CD8-positive, alpha-beta T cell (primary cell): ENCODE measurements at regions of chr4 and their contacts with region 1.

Region 1: GRCh38 chr4:40395908-40396793 is 61.0 kb downstream of the CHRNA9 start:
- DNase-seq: no peak
- ATAC-seq: no peak
- H3K4me3 ChIP-seq: no peak overlapping the region
- H3K4me3 Mint-ChIP-seq: no peak overlapping the region
- H3K27ac ChIP-seq: no peak overlapping the region
- H3K27ac Mint-ChIP-seq: no peak overlapping the region
- H3K4me1 ChIP-seq: no peaks in the 10 kb centered on the region
- H3K4me1 Mint-ChIP-seq: no peaks in the 10 kb centered on the region
- H3K27me3 ChIP-seq: no peaks in the 10 kb centered on the region
- H3K27me3 Mint-ChIP-seq: no peaks in the 10 kb centered on the region
- CTCF ChIP-seq: no peak

Region 2: GRCh38 chr4:40099010-40099409 is 297.1 kb before region 1 on chr4:
- CTCF ChIA-PET with region 1: no interaction called
- POLR2A ChIA-PET with region 1: no interaction called
- intact Hi-C with region 1: no loop called
- DNase-seq: no peak
- ATAC-seq: no peak
- H3K4me3 ChIP-seq: no peak overlapping the region
- H3K4me3 Mint-ChIP-seq: no peak overlapping the region
- H3K27ac ChIP-seq: no peak overlapping the region
- H3K27ac Mint-ChIP-seq: no peak overlapping the region
- H3K4me1 ChIP-seq: no peaks in the 10 kb centered on the region
- H3K4me1 Mint-ChIP-seq: peaks cover 9% of the 10 kb centered on the region
- H3K27me3 ChIP-seq: no peaks in the 10 kb centered on the region
- H3K27me3 Mint-ChIP-seq: no peaks in the 10 kb centered on the region
- CTCF ChIP-seq: no peak

Region 3: DNA sequence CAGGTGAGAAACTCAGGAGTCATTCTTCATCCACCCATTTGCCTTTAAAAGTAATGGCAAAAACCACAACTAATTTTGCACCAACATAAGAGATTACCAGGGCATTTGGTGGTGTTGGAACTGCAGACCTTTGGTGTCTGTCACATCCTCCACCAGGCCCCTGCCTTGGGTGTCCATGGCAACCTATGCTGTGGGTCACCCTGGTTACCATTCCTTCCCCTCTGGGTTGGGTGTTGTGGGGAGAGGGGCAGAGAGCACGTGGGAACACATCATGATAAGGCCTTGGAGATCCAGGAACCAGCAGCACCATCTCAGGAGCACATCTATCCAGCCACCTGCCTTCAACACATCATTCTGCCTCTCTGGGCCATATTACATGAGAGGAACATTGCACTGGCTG is 16.2 kb after region 1 on chr4:
- CTCF ChIA-PET with region 1: no interaction called
- POLR2A ChIA-PET with region 1: no interaction called
- intact Hi-C with region 1: loop called in 1 of 2 experiments (anchors 1 kb)
- DNase-seq: no peak
- ATAC-seq: no peak
- H3K4me3 ChIP-seq: no peak overlapping the region
- H3K4me3 Mint-ChIP-seq: no peak overlapping the region
- H3K27ac ChIP-seq: no peak overlapping the region
- H3K27ac Mint-ChIP-seq: no peak overlapping the region
- H3K4me1 ChIP-seq: no peaks in the 10 kb centered on the region
- H3K4me1 Mint-ChIP-seq: no peaks in the 10 kb centered on the region
- H3K27me3 ChIP-seq: no peaks in the 10 kb centered on the region
- H3K27me3 Mint-ChIP-seq: peaks cover 4% of the 10 kb centered on the region
- CTCF ChIP-seq: no peak